ENCODE measurements at regions of chr18 and their contacts with region 1.

Region 1: DNA sequence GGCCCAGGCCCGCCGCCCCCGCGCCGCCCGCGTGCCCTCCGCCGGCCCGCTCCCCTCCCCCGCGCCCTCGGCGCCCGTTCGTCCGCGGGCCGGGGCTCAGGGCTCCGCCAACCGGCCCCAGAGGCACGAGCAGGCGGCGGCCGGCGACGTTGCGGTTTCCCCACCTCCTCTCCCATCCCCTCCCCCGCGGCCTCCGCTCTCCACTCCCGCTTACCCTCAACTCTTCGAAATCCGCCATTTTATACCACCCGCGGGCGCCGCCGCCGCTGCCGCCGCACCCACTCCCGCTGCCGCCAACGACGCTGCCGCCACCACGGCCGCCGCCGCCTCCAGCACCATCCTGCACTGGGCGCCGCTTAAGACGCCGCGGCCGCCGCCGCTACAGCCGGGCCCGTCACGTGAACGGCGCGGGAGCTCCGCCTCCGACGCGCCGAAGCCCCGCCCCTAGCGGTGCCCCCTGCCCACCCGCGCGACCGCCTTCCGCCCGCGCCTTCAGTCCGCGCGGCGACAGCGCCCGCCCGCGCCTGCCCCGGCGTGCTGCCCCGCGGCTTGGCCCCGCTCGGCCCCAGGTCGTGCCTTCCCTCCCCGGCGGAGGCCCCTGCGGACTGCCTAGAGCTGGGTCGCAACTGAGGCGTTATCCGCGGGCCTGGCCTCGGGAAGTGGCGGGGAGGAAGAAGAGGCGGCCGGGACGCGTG is at the starts of genes KATNAL2 and PIAS2:
- DNase-seq: peak; percentile 85
- H3K4me3 ChIP-seq: peak within 1 kb of the TSS; percentile 68 to 93 (median 83)
- H3K27ac ChIP-seq: peak within 1 kb of the TSS; percentile 60
- H3K4me1 ChIP-seq: peaks cover 12% of the 10 kb centered on the region
- H3K27me3 ChIP-seq: no peaks in the 10 kb centered on the region
- CTCF ChIP-seq: no peak
- POLR2A ChIP-seq: peak; percentile 60
- total RNA-seq, gene KATNAL2: 1.3 and 1.8 TPM in 2 replicates
- total RNA-seq, gene PIAS2: 27.7 and 34.3 TPM in 2 replicates

Region 2: DNA sequence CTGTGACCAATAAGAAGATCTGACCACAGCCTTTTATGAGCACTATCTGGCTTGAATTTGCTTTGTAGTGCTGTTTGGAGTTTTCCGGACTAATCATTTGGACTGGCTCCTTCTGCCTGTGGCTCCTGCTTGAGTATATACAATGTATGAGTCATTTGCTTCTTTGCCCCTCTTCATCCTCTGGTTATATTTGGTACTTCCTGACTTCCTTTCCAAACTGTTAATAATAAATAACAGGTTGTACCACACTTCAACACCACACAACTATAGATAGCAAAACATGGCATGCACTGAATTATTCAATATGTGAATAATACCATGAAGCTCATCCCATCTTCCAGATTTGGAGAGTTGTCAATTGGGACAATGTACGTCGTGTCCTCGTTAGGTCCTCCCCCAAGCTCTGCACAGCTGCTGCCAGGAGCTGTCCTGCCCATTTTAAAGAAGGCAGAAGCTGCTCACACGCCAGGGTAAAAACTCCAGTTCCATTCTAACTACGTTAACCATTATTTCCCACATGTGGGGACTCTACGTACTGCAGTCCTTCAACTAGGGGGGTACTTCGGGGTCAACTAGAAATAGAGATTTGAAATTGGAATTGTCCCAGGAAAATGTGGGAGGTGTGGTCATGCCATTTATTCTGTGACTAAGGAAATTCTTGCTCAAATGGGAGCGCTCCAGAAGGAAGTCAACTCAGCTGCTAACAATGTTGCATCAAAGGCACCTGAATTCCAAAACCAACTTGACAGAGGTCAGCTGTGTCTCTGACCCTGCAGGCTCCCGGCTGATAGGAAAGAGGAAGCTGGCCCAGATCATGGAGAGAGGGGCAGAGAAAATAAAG is 198.5 kb before region 1 on chr18:
- CTCF ChIA-PET with region 1: interaction called, 3 read pairs
- POLR2A ChIA-PET with region 1: no interaction called
- dilution Hi-C with region 1: no loop called
- intact Hi-C with region 1: loop called (anchors 1 kb)
- DNase-seq: peak; percentile 89
- H3K4me3 ChIP-seq: peak overlapping the region in 1 of 3 experiments; percentile 28
- H3K27ac ChIP-seq: peak overlapping the region; percentile 54
- H3K4me1 ChIP-seq: peaks cover 18% of the 10 kb centered on the region
- H3K27me3 ChIP-seq: peaks cover 3 to 5% of the 10 kb centered on the region in 2 experiments
- CTCF ChIP-seq: no peak
- POLR2A ChIP-seq: no peak

Region 3: DNA sequence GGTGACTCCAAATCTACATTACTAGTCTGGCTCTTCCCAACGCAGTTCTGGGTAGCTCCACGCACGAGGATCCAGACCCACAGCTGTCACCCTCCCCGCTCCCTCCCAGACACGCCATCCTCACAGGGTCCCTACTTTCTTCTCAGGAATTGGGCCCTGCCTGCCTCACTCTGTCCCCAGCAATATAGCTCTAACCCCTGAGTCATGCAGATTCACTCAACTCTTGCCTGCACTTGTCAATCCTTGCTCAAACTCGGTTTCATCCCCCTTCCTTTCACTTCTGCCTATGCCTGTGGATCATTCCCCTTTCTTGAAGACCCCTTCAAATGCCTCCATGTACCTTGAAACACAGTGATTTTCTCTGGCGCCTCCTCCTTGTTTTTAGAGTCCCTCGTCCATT is 165.4 kb before region 1 on chr18:
- CTCF ChIA-PET with region 1: no interaction called
- POLR2A ChIA-PET with region 1: no interaction called
- dilution Hi-C with region 1: no loop called
- intact Hi-C with region 1: no loop called
- DNase-seq: no peak
- H3K4me3 ChIP-seq: no peak overlapping the region
- H3K27ac ChIP-seq: no peak overlapping the region
- H3K4me1 ChIP-seq: no peaks in the 10 kb centered on the region
- H3K27me3 ChIP-seq: peaks cover 28 to 30% of the 10 kb centered on the region in 2 experiments
- CTCF ChIP-seq: no peak
- POLR2A ChIP-seq: no peak

Region 4: GRCh38 chr18:46946656-46947282 is 29.5 kb after region 1 on chr18:
- CTCF ChIA-PET with region 1: interaction called, 4 read pairs
- POLR2A ChIA-PET with region 1: no interaction called
- dilution Hi-C with region 1: no loop called
- intact Hi-C with region 1: loop called (anchors 1 kb)
- DNase-seq: peak; percentile 90
- H3K4me3 ChIP-seq: peak overlapping the region; percentile 81 to 90 (median 84)
- H3K27ac ChIP-seq: peak overlapping the region; percentile 9
- H3K4me1 ChIP-seq: no peaks in the 10 kb centered on the region
- H3K27me3 ChIP-seq: peaks cover 0 to 5% of the 10 kb centered on the region in 2 experiments
- CTCF ChIP-seq: no peak
- POLR2A ChIP-seq: no peak

Region 5: DNA sequence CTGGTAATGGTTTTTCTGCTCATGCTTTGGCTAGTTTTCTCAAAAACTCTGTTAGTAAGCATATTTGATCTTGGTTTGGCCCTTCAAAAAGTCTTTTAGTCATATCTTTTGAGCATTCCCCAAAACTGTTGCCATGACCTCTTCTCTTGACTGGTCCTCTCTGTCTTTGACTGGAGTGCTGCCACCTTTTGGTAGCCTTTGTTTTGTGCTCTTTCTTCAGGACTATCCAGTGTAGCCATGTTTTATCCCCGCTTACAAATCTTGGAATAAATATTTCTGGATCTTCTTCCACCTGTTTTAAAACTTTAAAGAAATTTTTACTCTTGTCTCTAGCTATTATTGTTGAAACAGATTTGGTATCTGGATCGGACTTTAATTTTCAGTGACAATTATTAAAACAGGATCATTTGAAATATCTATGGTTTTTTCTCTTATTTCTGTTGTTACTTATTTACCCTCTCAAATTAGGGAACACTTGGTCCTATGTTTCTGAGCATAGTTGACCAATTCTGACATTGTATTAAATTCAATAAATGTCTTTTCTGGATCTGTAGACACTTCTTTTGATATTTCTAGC is 119.1 kb after region 1 on chr18:
- CTCF ChIA-PET with region 1: no interaction called
- POLR2A ChIA-PET with region 1: no interaction called
- dilution Hi-C with region 1: no loop called
- intact Hi-C with region 1: no loop called
- DNase-seq: peak; percentile 6
- H3K4me3 ChIP-seq: no peak overlapping the region
- H3K27ac ChIP-seq: no peak overlapping the region
- H3K4me1 ChIP-seq: no peaks in the 10 kb centered on the region
- H3K27me3 ChIP-seq: no peaks in the 10 kb centered on the region
- CTCF ChIP-seq: peak; percentile 20 to 33
- POLR2A ChIP-seq: no peak

Region 6: DNA sequence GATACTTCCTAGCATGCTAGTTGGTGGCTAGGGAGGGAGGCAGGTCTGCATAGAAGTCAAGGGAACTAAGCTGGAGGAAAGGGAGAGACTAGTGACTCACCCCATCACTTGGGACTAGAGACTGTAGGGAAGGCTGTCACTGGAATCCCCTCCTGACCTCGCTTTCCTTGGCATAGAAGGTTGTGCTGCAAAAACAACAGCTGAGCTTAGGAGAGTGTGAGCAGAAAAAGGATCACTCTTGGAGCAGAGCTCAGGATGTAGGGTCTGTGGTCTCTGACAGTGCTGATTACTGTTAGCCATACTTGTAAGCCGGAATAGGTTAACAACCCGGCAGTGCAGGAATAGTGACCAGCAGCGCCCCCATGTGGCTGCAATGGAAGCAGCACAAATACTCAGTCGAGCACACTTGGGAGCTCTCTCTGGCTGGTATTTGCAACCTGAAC is 1080.1 kb after region 1 on chr18:
- CTCF ChIA-PET with region 1: no interaction called
- POLR2A ChIA-PET with region 1: no interaction called
- dilution Hi-C with region 1: no loop called
- intact Hi-C with region 1: no loop called
- DNase-seq: no peak
- H3K4me3 ChIP-seq: no peak overlapping the region
- H3K27ac ChIP-seq: no peak overlapping the region
- H3K4me1 ChIP-seq: no peaks in the 10 kb centered on the region
- H3K27me3 ChIP-seq: peaks cover 0 to 2% of the 10 kb centered on the region in 2 experiments
- CTCF ChIP-seq: peak in 1 of 2 donors; percentile 60
- POLR2A ChIP-seq: no peak